ENCODE measurements at regions of chr1 and their contacts with region 1.

Region 1: GRCh38 chr1:48817505-48818114 is 40.9 kb upstream of the BEND5 start:
- DNase-seq: peak; percentile 50
- ATAC-seq: peak; percentile 81
- H3K4me3 Mint-ChIP-seq: no peak overlapping the region
- H3K27ac Mint-ChIP-seq: no peak overlapping the region
- H3K4me1 Mint-ChIP-seq: peaks cover 17% of the 10 kb centered on the region
- H3K27me3 Mint-ChIP-seq: no peaks in the 10 kb centered on the region
- CTCF ChIP-seq: no peak

Region 2: DNA sequence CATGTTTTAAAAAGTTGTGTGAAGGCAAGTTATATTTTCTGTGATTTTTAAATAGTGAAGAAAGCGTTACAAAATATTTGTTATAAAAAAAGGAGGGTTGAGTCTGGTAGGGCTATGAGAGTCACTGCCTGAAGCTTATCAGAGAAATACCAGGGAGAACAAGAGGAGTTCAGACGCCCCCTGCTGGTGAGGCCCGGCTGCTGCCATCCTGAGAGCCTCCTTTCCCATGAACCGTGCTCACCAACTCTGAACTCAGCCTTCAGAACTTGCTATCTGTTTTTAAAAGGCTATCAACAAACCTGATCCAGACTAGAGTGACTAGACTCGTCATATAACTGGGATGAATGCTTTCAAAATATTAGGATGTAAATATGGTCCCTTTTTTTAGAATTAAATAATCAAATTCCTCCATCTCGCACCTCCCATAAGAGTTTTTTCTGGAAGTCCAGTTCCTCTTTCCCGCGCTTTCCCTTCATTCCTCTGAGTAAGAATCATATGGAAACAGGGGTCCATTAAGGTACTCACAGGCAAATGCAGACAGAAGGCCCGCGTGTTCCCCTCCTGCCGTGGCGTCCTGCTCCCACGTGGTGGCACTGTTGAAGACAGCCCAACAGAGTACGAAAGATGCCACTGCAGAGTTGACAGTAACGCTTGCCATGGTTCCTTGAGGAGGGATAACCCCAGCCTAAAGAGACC is 319.4 kb before region 1 on chr1:
- CTCF ChIA-PET with region 1: interaction called, 6 read pairs
- POLR2A ChIA-PET with region 1: no interaction called
- intact Hi-C with region 1: loop called (anchors 1 kb)
- DNase-seq: peak; percentile 32
- ATAC-seq: peak; percentile 77
- H3K4me3 Mint-ChIP-seq: no peak overlapping the region
- H3K27ac Mint-ChIP-seq: no peak overlapping the region
- H3K4me1 Mint-ChIP-seq: peaks cover 4% of the 10 kb centered on the region
- H3K27me3 Mint-ChIP-seq: peaks cover 3% of the 10 kb centered on the region
- CTCF ChIP-seq: peak; percentile 85

Region 3: DNA sequence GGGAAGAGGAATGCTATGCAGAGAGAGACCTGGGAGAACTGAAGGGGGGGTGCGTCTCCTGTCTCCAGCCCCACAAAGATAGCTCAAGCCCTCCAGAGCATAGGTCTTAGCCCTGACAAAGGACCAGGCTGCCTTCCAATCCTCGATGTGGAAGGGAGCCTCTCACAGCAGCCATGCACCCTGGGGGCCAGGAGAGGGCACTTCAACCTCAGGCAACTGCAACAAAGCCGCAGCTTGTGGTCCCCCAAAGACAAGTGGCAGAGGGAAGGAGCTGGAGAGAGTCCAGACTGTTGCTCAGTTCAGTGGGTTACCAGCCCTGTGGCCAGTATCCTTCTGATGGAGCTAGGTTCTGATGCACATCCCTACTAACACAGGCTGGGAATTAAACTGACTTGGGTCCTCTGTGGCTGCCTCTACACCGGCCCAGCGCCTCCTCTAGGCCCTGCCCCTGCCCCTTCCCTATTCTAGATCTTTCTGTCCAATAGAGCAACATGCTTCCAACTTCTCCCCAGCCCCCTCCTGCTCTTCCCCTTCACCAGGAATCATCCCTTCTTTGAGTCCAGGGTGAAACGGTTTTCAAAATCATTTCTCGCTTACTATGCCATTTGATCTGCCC is 244.9 kb before region 1 on chr1:
- CTCF ChIA-PET with region 1: interaction called, 23 read pairs
- POLR2A ChIA-PET with region 1: no interaction called
- intact Hi-C with region 1: no loop called
- DNase-seq: no peak
- ATAC-seq: no peak
- H3K4me3 Mint-ChIP-seq: no peak overlapping the region
- H3K27ac Mint-ChIP-seq: no peak overlapping the region
- H3K4me1 Mint-ChIP-seq: no peaks in the 10 kb centered on the region
- H3K27me3 Mint-ChIP-seq: peaks cover 1% of the 10 kb centered on the region
- CTCF ChIP-seq: no peak

Region 4: GRCh38 chr1:48697066-48697707 is 120.4 kb before region 1 on chr1:
- CTCF ChIA-PET with region 1: interaction called, 10 read pairs
- POLR2A ChIA-PET with region 1: no interaction called
- intact Hi-C with region 1: loop called (anchors 5 kb)
- DNase-seq: peak; percentile 50
- ATAC-seq: no peak
- H3K4me3 Mint-ChIP-seq: no peak overlapping the region
- H3K27ac Mint-ChIP-seq: no peak overlapping the region
- H3K4me1 Mint-ChIP-seq: no peaks in the 10 kb centered on the region
- H3K27me3 Mint-ChIP-seq: peaks cover 3% of the 10 kb centered on the region
- CTCF ChIP-seq: peak; percentile 80

Region 5: DNA sequence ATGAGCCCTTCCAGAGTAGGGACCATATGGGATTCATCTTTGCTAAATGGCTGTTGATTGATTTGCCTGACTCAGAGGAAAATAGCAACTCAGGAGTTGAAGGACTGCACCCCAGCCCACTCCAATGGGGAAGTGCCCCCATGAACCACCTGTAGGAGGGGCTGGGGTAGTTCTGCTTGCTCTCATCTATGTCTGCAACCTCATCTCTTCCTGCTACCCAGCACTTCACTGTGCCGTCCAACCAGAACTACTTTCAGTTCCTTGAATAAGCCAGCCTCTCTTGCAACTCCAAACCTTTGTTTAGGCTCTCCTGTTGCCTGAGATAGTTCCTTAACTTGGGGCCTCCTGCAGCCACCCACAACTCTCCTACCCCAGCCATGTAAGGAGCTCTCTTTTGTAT is 67.5 kb before region 1 on chr1:
- CTCF ChIA-PET with region 1: interaction called, 57 read pairs
- POLR2A ChIA-PET with region 1: interaction called, 8 read pairs
- intact Hi-C with region 1: loop called (anchors 1 kb)
- DNase-seq: peak; percentile 35
- ATAC-seq: peak; percentile 100
- H3K4me3 Mint-ChIP-seq: peak overlapping the region; percentile 8
- H3K27ac Mint-ChIP-seq: peak overlapping the region; percentile 87
- H3K4me1 Mint-ChIP-seq: peaks cover 47% of the 10 kb centered on the region
- H3K27me3 Mint-ChIP-seq: no peaks in the 10 kb centered on the region
- CTCF ChIP-seq: no peak

Region 6: DNA sequence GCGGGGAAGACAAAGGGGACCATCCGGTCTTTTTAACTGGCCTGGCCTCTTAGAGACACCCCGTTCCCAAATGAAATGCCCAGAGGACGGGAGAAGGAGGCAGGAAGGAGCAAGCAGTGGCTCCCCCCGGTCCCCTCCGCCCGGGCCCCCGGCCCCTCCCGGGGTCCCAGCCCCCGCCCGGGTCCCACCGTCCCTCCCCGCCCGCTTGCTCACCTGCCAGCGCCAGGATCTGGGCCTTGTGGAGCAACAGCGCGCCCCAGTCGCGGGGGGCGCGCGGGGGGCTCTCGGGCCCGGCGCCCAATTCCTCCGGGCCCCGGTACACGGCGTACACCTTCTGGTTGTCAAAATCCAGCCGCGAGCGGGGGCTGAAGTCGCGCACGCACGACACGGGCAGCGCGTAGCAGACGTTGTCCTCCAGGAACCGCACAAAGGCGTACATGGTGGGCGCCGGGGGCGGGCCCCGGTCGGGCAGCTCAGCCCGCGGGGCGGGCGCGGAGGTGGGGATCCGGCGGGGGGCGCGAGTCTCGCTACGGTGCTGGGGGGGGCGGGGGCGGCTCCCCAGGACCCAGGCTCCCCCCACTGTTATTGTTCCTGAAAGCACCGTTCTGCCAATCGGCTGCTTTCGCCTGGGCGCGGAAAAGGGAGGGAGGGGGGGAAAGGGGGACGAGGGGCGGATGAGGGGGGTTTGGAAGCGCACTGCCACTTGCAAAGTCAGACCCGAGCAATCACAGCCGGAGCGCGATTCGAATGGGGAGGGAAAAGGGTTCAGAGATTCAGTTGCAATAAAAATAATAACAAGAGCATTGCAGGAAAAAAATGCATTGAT is 41.0 kb before region 1 on chr1 and contains the start of gene BEND5:
- CTCF ChIA-PET with region 1: interaction called, 40 read pairs
- POLR2A ChIA-PET with region 1: interaction called, 6 read pairs
- intact Hi-C with region 1: loop called (anchors 1 kb)
- DNase-seq: peak; percentile 65
- ATAC-seq: peak; percentile 82
- H3K4me3 Mint-ChIP-seq: peak within 1 kb of the TSS; percentile 94
- H3K27ac Mint-ChIP-seq: peak within 1 kb of the TSS; percentile 92
- H3K4me1 Mint-ChIP-seq: peaks cover 67% of the 10 kb centered on the region
- H3K27me3 Mint-ChIP-seq: no peaks in the 10 kb centered on the region
- CTCF ChIP-seq: no peak
- total RNA-seq, gene BEND5: 14.5 and 17.9 TPM in 2 replicates

Region 7: GRCh38 chr1:49824261-49824660 is 1006.7 kb after region 1 on chr1:
- CTCF ChIA-PET with region 1: no interaction called
- POLR2A ChIA-PET with region 1: no interaction called
- intact Hi-C with region 1: no loop called
- DNase-seq: no peak
- ATAC-seq: no peak
- H3K4me3 Mint-ChIP-seq: no peak overlapping the region
- H3K27ac Mint-ChIP-seq: no peak overlapping the region
- H3K4me1 Mint-ChIP-seq: no peaks in the 10 kb centered on the region
- H3K27me3 Mint-ChIP-seq: no peaks in the 10 kb centered on the region
- CTCF ChIP-seq: no peak

Region 8: DNA sequence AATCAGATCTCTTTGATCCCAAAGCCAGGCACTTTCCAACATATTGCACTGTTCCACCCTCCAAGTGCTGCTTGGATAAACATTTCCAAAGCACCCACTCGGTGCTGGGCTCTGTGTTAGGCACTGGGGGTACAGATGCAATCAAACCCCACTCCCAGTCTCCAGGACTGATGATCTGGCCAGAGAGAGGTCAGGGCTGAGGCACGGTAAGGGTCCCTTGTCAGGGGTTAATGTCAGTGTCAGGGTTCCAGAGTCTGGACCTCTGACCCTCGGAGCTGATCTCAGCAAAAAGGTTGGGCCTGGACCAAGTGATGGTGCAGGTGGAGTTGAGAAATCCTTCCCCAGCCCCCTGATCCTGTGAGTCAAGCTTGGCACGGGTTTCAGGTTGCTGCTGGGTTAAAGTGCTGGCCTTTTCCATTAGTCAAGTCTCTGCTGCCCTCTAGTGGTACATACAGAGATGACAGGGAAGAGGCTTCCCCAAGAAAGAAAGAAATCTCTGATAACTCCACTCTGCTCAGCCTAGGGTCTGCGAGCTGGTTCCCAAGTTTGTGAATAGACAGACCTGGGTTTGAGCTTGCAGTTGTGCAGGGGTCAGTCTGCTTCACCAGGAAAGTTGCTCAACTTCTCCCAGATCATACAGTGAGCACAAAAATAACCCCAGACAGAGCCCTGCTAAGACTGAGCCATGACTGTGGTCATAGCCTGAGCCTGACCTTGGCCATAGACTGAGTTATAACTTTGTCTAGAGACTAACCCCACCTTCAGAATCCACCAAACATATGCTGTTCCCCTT is 1531.0 kb after region 1 on chr1:
- CTCF ChIA-PET with region 1: no interaction called
- POLR2A ChIA-PET with region 1: no interaction called
- intact Hi-C with region 1: loop called (anchors 5 kb)
- DNase-seq: no peak
- ATAC-seq: peak; percentile 34
- H3K4me3 Mint-ChIP-seq: no peak overlapping the region
- H3K27ac Mint-ChIP-seq: no peak overlapping the region
- H3K4me1 Mint-ChIP-seq: no peaks in the 10 kb centered on the region
- H3K27me3 Mint-ChIP-seq: peaks cover 15% of the 10 kb centered on the region
- CTCF ChIP-seq: peak; percentile 36

Measured in activated B cell treated with CpG ODN at 0.5 μM for 24 hours (primary cell).